Heart right ventricle (tissue), 16 donors: ENCODE measurements at regions of chr7 and their contacts with region 1.

Region 1: DNA sequence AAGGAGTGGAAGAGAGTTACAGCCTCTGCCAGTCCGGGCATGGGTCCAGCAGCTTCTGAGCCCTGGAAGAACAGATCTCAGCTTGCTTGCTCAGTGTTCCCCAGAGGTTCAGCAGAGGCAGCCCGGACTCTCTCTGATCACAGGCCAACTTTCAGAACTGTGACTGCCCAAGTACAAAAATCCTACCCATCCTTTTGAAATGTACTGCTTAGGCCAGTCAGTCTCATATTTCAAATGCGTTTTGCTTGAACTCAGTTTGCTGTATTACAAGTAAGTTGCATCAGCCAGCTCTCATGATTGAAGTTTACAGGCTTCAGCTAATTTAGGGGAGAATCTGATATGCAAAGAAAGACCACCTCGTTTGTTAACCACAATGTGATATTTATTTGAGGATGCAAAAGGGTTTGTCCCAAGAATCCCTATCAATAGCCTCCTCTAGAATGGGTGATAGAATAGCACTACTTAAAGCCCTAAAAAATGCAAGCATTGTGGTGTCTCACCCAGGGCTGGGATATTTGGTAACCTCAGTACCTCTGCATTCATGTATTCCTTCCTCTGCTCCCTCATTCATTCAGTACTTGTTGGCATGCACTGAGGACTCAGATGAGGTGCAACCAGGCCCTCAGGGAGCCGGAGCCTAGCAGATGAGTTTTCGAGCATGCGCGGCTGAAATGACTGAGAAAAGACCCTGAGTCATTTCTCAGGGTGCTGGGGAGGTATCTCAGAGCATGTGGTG is 7.0 kb downstream of the AIMP2 start:
- DNase-seq: peak; percentile 55 to 76
- ATAC-seq: peak in 7 of 8 donors; percentile 11 to 86 (median 82)
- H3K4me3 ChIP-seq: no peak overlapping the region
- H3K27ac ChIP-seq: peak overlapping the region in 6 of 10 donors; percentile 12 to 67 (median 44)
- H3K4me1 ChIP-seq: peaks cover 0 to 42% (median 20%) of the 10 kb centered on the region in 9 donors
- H3K27me3 ChIP-seq: no peaks in the 10 kb centered on the region
- CTCF ChIP-seq: no peak

Region 2: GRCh38 chr7:6323967-6324701 is 308.0 kb after region 1 on chr7:
- intact Hi-C with region 1: loop called in 1 of 10 experiments (anchors 10 kb)
- DNase-seq: no peak
- ATAC-seq: no peak
- H3K4me3 ChIP-seq: no peak overlapping the region
- H3K27ac ChIP-seq: no peak overlapping the region
- H3K4me1 ChIP-seq: peaks cover 0 to 9% (median 0%) of the 10 kb centered on the region in 9 donors
- H3K27me3 ChIP-seq: no peaks in the 10 kb centered on the region
- CTCF ChIP-seq: no peak